Activated CD8-positive, alpha-beta memory T cell treated with anti-CD3 and anti-CD28 coated beads, Interleukin-2, amount 10 ng/mL, durations not matched to agents 7 days and 5 days (primary cell): ENCODE measurements at regions of chr7 and their contacts with region 1.

Region 1: GRCh38 chr7:29105752-29106668 is 40.3 kb downstream of the CPVL start:
- DNase-seq: no peak
- ATAC-seq: peak; percentile 69
- H3K4me3 Mint-ChIP-seq: no peak overlapping the region
- H3K27ac Mint-ChIP-seq: no peak overlapping the region
- H3K4me1 Mint-ChIP-seq: no peaks in the 10 kb centered on the region
- H3K27me3 Mint-ChIP-seq: peaks cover 18% of the 10 kb centered on the region

Region 2: GRCh38 chr7:28890137-28890536 is 215.9 kb before region 1 on chr7:
- CTCF ChIA-PET with region 1: no interaction called
- DNase-seq: no peak
- ATAC-seq: no peak
- H3K4me3 Mint-ChIP-seq: no peak overlapping the region
- H3K27ac Mint-ChIP-seq: no peak overlapping the region
- H3K4me1 Mint-ChIP-seq: no peaks in the 10 kb centered on the region
- H3K27me3 Mint-ChIP-seq: peaks cover 33% of the 10 kb centered on the region

Region 3: DNA sequence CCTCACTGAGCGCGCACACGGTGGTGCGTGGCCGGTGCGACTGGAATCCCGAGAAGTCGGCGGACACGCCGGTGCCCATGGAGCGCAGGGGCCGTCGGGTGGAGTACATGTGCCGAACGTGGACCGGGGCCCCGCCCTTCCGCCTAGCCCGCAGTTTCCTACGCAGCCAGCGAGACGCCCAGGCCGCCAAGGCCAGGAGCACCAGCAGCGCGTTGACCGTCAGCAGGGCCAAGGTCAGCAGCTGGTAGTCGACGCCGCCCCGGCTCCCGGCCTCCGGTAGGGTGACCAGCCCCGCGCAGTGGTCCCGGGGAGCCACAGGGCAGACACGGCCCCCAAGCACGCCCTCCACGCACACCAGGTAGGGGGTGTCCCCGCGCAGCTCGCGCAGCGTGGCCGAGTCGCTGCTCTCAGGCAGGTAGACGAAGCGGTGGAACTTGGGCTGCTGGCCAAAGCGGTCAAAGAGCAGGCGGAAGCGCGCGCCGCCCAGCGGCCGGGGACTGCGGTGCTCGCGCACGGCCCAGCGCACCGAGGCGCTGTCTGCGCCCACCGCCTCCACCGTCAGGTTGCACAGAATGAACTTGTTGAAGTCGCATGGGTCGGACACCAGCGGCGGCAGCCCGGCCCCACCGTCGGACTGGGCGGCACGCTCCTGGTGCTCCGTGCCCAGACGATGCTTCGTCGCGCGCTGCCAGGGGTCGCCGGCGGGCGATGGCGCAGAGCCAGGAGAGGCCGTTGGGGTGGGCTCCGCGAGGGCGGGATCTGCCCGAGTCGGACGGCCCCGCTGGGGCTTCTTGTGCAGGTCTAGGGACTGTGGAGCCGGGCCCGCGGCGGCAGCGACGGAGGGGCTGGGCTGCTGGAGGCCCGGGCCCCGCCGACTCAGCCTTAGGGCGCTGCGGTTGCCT is 150.0 kb before region 1 on chr7:
- CTCF ChIA-PET with region 1: interaction called, 14 read pairs
- DNase-seq: no peak
- ATAC-seq: peak; percentile 16
- H3K4me3 Mint-ChIP-seq: no peak overlapping the region
- H3K27ac Mint-ChIP-seq: no peak overlapping the region
- H3K4me1 Mint-ChIP-seq: peaks cover 10% of the 10 kb centered on the region
- H3K27me3 Mint-ChIP-seq: peaks cover 81% of the 10 kb centered on the region

Region 4: GRCh38 chr7:28986765-28987110 is 119.3 kb before region 1 on chr7:
- CTCF ChIA-PET with region 1: no interaction called
- DNase-seq: no peak
- ATAC-seq: no peak
- H3K4me3 Mint-ChIP-seq: no peak overlapping the region
- H3K27ac Mint-ChIP-seq: no peak overlapping the region
- H3K4me1 Mint-ChIP-seq: no peaks in the 10 kb centered on the region
- H3K27me3 Mint-ChIP-seq: peaks cover 19% of the 10 kb centered on the region

Region 5: GRCh38 chr7:29091715-29092114 is 14.3 kb before region 1 on chr7:
- CTCF ChIA-PET with region 1: interaction called, 10 read pairs
- DNase-seq: no peak
- ATAC-seq: peak; percentile 91
- H3K4me3 Mint-ChIP-seq: peak overlapping the region; percentile 70
- H3K27ac Mint-ChIP-seq: peak overlapping the region; percentile 85
- H3K4me1 Mint-ChIP-seq: peaks cover 23% of the 10 kb centered on the region
- H3K27me3 Mint-ChIP-seq: peaks cover 18% of the 10 kb centered on the region

Region 6: GRCh38 chr7:29408841-29409243 is 302.8 kb after region 1 on chr7:
- CTCF ChIA-PET with region 1: interaction called, 15 read pairs
- DNase-seq: peak; percentile 63
- ATAC-seq: peak; percentile 55
- H3K4me3 Mint-ChIP-seq: no peak overlapping the region
- H3K27ac Mint-ChIP-seq: no peak overlapping the region
- H3K4me1 Mint-ChIP-seq: peaks cover 2% of the 10 kb centered on the region
- H3K27me3 Mint-ChIP-seq: no peaks in the 10 kb centered on the region